ENCODE measurements at regions of chr9 and their contacts with region 1.

Region 1: DNA sequence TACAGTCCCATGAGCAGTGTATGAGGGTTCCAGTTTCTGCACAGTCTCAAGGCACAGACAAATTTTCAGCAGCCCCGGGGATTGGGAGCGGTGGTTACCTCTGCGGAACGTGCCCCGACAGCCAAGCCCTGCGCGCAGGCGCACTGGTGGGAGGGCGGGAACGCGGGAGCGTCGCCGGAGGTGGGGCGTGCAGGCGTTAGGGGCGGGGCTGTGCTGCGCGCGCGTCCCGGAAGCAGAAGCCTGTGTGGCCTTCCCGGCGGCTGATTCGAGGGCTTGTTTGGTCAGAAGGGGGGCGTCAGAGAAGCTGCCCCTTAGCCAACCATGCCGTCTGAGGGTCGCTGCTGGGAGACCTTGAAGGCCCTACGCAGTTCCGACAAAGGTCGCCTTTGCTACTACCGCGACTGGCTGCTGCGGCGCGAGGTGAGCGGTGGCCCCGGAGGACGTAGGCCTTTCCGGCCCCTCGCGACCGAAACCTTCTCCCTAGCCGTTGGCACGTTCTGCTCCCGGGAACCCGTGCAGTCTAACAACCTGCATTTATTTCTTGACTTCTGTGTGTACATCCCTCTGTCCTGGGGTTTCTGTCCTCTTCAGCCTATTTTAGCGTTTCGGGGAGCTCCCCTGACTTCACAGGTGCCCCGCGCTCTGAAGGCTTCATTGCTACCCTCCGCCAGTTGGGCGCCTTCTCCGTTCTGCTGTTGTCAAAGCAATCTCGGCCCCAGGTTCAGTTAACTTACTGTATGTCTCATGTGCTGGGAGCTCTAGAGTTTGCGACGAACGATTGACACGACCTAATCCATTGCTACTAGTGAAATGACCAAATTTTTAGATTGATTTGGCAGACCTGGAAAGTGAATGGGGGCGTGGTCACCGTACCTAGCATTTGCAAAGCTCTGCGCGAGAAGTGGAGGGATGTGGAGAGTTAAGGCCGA is at the start of gene GLE1:
- DNase-seq: peak; percentile 93 to 99 (median 97)
- ATAC-seq: peak; percentile 95
- H3K4me3 ChIP-seq: peak within 1 kb of the TSS; percentile 80 to 96
- H3K4me3 Mint-ChIP-seq: peak within 1 kb of the TSS; percentile 99
- H3K27ac ChIP-seq: peak within 1 kb of the TSS; percentile 84 to 90
- H3K27ac Mint-ChIP-seq: peak within 1 kb of the TSS; percentile 99
- H3K4me1 ChIP-seq: peaks cover 18% of the 10 kb centered on the region
- H3K4me1 Mint-ChIP-seq: peaks cover 38% of the 10 kb centered on the region
- H3K27me3 ChIP-seq: no peaks in the 10 kb centered on the region
- H3K27me3 Mint-ChIP-seq: no peaks in the 10 kb centered on the region
- CTCF ChIP-seq: no peak
- total RNA-seq, gene GLE1: 6.6 to 8.5 TPM

Region 2: GRCh38 chr9:128370826-128371621 is 133.7 kb before region 1 on chr9 and contains the start of gene URM1:
- CTCF ChIA-PET with region 1: no interaction called
- POLR2A ChIA-PET with region 1: interaction called, 5 read pairs
- intact Hi-C with region 1: loop called (anchors 1 kb)
- DNase-seq: peak; percentile 91 to 98 (median 96)
- ATAC-seq: peak; percentile 90
- H3K4me3 ChIP-seq: peak within 1 kb of the TSS; percentile 84 to 95
- H3K4me3 Mint-ChIP-seq: peak within 1 kb of the TSS; percentile 97
- H3K27ac ChIP-seq: peak within 1 kb of the TSS; percentile 76 to 96
- H3K27ac Mint-ChIP-seq: peak within 1 kb of the TSS; percentile 98
- H3K4me1 ChIP-seq: peaks cover 16% of the 10 kb centered on the region
- H3K4me1 Mint-ChIP-seq: peaks cover 43% of the 10 kb centered on the region
- H3K27me3 ChIP-seq: no peaks in the 10 kb centered on the region
- H3K27me3 Mint-ChIP-seq: no peaks in the 10 kb centered on the region
- CTCF ChIP-seq: no peak
- total RNA-seq, gene URM1: 30.4 to 31.5 TPM